ENCODE measurements at regions of chr14 and their contacts with region 1.

Region 1: GRCh38 chr14:75022655-75023054 is 19.9 kb downstream of the EIF2B2 start:
- DNase-seq: peak; percentile 40
- ATAC-seq: peak; percentile 90
- H3K4me3 ChIP-seq: no peak overlapping the region
- H3K27ac ChIP-seq: no peak overlapping the region
- H3K4me1 ChIP-seq: no peaks in the 10 kb centered on the region
- H3K27me3 ChIP-seq: no peaks in the 10 kb centered on the region; a peak in 1 of 5 replicates
- CTCF ChIP-seq: peak; percentile 52
- EP300 ChIP-seq: no peak
- POLR2A ChIP-seq: no peak
- RAD21 ChIP-seq: 0 out of 2 replicates have a peak, but pooled peaks have one; percentile 35

Region 2: GRCh38 chr14:74913986-74914573 is 108.6 kb before region 1 on chr14:
- CTCF ChIA-PET with region 1: no interaction called
- POLR2A ChIA-PET with region 1: no interaction called
- in situ Hi-C with region 1: no loop called
- intact Hi-C with region 1: loop called (anchors 1 kb)
- DNase-seq: peak; percentile 62
- ATAC-seq: peak; percentile 87
- H3K4me3 ChIP-seq: no peak overlapping the region
- H3K27ac ChIP-seq: no peak overlapping the region
- H3K4me1 ChIP-seq: peaks cover 11% of the 10 kb centered on the region; the same call in 1 of the 2 replicates
- H3K27me3 ChIP-seq: no peaks in the 10 kb centered on the region
- CTCF ChIP-seq: peak; percentile 90
- EP300 ChIP-seq: no peak
- POLR2A ChIP-seq: no peak
- RAD21 ChIP-seq: peak; percentile 85

Region 3: DNA sequence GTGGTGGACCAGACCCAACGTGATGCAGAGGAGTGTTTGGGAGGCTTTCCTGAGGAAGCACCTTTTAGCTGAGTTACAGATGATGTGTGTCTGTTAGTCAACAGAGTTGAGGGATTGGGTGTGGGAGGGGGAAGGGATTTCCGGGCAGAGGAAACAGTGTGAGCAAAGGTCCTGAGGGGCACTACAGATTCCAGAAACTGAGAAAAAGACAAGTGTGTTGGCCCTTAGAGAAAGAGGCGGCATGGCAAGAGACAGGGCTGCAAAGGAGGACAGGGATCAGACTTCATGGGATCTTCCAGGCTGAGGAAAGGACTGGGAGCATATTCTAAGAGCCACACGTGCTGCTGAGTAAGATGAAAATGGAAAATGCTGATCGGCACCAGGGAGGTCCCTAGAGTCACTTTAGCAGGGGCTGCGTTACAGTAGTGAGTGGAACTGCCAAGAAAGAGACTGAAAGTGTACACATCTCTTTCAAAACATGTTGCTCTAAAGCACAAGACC is 90.2 kb before region 1 on chr14:
- CTCF ChIA-PET with region 1: no interaction called
- POLR2A ChIA-PET with region 1: no interaction called
- in situ Hi-C with region 1: no loop called
- intact Hi-C with region 1: no loop called
- DNase-seq: no peak
- ATAC-seq: peak; percentile 41
- H3K4me3 ChIP-seq: peak overlapping the region; percentile 5 to 61 (median 49); a peak in 5 of 6 replicates
- H3K27ac ChIP-seq: no peak overlapping the region
- H3K4me1 ChIP-seq: peaks cover 39% of the 10 kb centered on the region
- H3K27me3 ChIP-seq: peaks cover 0 to 2% of the 10 kb centered on the region in 2 experiments; a peak in 2 of 5 replicates
- CTCF ChIP-seq: no peak
- EP300 ChIP-seq: no peak
- POLR2A ChIP-seq: no peak
- RAD21 ChIP-seq: no peak

Region 4: DNA sequence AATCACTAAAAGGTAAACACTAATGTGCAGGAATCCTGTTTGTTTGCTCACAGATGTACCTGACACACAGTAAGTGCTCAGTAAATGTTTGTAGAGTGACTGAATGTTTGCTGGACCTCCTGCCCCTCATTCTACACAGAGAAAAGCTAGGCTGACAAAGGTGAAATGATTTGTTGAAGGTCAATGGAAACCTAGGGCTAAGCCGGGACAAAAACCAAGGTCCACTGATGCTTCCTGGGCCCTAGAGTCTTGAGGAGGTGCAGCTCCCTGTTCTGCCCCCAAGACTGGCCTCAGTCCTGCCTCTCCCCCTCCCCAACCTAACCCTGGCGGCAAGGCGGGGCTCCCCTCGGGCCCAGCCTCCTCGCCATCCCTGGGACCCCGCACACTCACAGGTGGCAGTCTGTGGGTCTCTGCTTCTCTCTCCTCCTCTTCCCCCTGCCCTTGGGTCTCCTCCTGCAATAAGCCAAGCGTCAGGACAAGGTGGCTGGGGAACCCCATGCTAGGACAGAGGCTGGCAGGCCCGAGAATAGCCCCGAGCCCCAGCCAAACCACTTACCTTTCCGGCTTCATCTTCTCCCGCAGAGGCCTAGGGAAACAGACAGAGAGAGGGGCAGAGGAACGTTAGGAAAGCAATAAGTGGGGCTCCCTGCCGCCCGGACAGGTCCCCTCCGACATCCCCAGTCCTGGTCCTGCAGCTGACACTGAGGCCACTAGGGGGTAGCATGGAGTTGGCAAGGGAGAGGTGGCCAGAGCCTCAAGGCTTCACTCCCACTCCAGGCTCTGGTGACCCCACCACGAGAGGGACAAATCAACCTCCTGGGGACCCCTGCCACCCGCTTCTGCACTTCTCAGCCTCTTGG is 76.6 kb before region 1 on chr14:
- CTCF ChIA-PET with region 1: no interaction called
- POLR2A ChIA-PET with region 1: no interaction called
- in situ Hi-C with region 1: no loop called
- intact Hi-C with region 1: loop called (anchors 2 kb)
- DNase-seq: peak; percentile 84
- ATAC-seq: peak; percentile 86
- H3K4me3 ChIP-seq: no peak overlapping the region
- H3K27ac ChIP-seq: peak overlapping the region; percentile 66
- H3K4me1 ChIP-seq: peaks cover 36% of the 10 kb centered on the region
- H3K27me3 ChIP-seq: no peaks in the 10 kb centered on the region
- CTCF ChIP-seq: peak; percentile 94
- EP300 ChIP-seq: peak in 1 of 2 experiments; percentile 84; a peak in 2 of 4 replicates
- POLR2A ChIP-seq: 0 out of 4 replicates have a peak, but pooled peaks of 1 of the 2 experiments have one; percentile 13
- RAD21 ChIP-seq: peak; percentile 82

Region 5: DNA sequence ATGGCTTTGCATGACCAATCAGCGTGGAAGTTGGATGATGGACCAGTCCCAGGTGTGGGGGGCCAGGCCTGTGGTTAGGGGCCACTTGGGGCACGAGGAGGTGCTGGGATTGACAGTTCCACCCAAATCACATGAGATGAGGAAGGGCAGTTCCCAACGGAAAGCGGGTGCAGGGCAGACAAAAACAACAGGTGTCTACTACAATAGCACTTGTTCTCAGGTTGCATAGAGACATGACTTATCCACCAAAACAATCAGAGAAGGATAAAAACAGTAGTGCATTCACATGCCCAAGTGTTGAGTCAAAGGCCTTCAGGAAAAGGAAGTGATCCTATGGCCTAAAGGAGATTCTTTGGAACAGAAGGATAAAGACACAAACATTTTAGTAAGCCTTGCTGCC is 34.5 kb before region 1 on chr14:
- CTCF ChIA-PET with region 1: no interaction called
- POLR2A ChIA-PET with region 1: no interaction called
- in situ Hi-C with region 1: no loop called
- intact Hi-C with region 1: no loop called
- DNase-seq: no peak
- ATAC-seq: no peak
- H3K4me3 ChIP-seq: no peak overlapping the region
- H3K27ac ChIP-seq: no peak overlapping the region
- H3K4me1 ChIP-seq: peaks cover 5% of the 10 kb centered on the region; the same call in 1 of the 2 replicates
- H3K27me3 ChIP-seq: peaks cover 4 to 21% of the 10 kb centered on the region in 2 experiments; a peak in 3 of 5 replicates
- CTCF ChIP-seq: no peak
- EP300 ChIP-seq: no peak
- POLR2A ChIP-seq: no peak
- RAD21 ChIP-seq: no peak

Measured in HepG2 (cell line).